ENCODE measurements at regions of chr7 and their contacts with region 1.

Region 1: DNA sequence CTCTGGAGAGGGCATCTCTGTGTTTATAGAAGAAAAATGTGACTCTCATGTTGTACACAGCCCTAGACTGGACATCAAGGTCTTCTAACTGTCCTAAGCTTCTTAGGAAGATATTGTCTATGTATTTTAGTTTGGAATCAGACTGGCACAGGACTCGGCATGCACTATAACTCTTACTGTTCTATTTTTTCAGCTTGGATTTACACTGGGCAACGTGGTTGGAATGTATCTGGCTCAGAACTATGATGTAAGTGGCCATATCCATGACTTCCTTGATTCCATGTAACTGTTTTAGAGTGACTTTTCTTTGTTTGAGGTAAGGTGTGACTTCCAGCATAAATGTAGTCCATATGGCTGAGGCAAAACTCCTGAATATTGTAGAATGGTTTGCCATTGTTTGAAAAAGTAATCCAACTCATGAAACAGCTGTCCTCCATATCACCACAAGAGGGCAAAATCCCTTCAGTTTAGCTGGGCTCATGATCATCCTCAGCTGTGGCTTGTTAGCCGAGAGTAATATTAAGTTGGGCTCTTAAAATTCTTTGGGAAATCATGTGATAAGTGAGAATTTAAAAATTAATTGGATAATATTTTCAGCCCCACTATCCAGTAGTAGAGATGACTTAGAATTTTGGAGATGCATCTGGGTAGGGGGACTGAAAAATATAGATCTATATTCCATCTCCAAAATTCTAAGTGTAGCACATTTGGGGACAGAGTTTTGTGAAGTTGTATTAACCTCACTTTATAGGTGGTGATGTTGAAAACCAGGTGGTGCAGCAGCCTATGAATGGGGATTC is 10.4 kb downstream of the STMP1 start:
- DNase-seq: no peak
- ATAC-seq: peak; percentile 80

Region 2: GRCh38 chr7:135771961-135772638 is 99.3 kb after region 1 on chr7:
- intact Hi-C with region 1: no loop called
- DNase-seq: no peak
- ATAC-seq: no peak

Region 3: DNA sequence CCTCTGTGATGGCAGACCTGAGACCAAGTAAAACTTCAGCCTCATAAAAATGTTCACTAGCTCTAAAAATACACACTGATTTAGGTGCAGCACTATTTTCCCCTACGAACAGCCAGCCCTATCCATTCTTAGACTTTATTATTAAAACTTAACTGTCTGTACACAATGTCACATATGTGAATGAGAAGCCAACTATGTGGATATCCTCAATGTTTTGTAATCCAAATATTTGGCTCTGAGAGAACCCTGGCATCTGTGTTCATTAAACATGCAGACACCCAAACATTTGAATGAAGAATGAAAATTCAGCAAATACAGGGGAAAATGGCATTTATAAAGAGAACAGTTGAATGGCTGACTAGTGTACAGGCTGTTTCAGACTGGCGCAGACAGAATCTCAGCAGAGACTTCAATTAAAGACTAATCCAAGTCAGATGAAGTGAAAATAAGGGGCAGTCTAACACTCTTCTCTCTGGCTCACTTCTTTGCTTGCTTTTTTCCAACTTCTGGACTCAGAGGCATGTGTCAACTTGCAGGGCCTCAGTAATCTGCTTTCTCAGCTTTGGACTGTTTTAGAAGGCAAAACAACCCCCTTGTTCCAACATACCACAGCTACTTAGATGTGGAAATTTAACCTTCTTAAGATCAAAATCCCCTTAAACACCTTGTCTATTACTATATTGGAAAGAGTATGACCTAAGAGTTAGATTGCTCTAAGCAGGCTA is 123.2 kb after region 1 on chr7:
- intact Hi-C with region 1: loop called (anchors 5 kb)
- DNase-seq: no peak
- ATAC-seq: no peak